ENCODE measurements at regions of chr5 and their contacts with region 1.

Region 1: GRCh38 chr5:67156976-67157583 is 39.5 kb downstream of the CD180 start:
- DNase-seq: peak; percentile 19
- ATAC-seq: peak; percentile 73
- H3K4me3 Mint-ChIP-seq: no peak overlapping the region
- H3K27ac Mint-ChIP-seq: no peak overlapping the region
- H3K4me1 Mint-ChIP-seq: peaks cover 11% of the 10 kb centered on the region
- H3K27me3 Mint-ChIP-seq: no peaks in the 10 kb centered on the region
- CTCF ChIP-seq: peak; percentile 80

Region 2: DNA sequence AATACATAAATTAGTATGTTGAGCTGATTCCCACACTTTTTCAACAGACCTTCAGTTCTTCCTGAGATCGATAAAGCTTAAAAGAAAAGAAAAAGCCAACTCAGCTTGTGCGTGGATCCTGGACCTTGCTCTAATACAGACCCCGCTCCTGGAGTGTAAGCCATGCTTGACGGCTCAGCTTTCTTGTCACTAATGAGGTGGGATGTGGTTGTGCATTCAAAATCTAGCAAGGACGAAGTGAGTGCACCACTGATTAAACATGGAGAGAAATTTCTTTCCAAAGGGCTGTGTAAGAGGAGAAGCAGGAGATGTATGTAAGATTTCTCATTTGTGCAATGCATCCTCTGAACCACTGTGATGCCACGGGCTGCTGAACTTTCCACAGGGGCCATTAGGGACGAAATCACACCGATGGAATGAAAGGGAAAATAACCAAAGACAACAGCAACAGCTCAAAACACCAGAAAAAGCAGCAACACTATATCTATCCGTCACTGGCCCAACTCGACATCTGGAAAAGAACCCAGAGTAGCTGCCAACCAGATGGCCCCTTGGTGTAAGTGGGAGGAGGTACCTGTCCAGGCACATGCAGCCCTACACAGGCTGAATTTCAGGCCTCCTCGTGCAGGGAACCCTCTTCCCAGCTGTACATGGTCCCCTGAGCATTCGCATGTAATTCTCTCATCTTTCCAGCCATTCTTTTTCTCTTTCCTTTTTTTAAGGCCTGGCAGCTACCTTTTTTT is 834.1 kb before region 1 on chr5:
- CTCF ChIA-PET with region 1: no interaction called
- POLR2A ChIA-PET with region 1: no interaction called
- intact Hi-C with region 1: no loop called
- DNase-seq: no peak
- ATAC-seq: no peak
- H3K4me3 Mint-ChIP-seq: no peak overlapping the region
- H3K27ac Mint-ChIP-seq: no peak overlapping the region
- H3K4me1 Mint-ChIP-seq: no peaks in the 10 kb centered on the region
- H3K27me3 Mint-ChIP-seq: peaks cover 17% of the 10 kb centered on the region
- CTCF ChIP-seq: no peak

Region 3: GRCh38 chr5:66987949-66988838 is 168.9 kb before region 1 on chr5:
- CTCF ChIA-PET with region 1: interaction called, 4 read pairs
- POLR2A ChIA-PET with region 1: no interaction called
- intact Hi-C with region 1: loop called (anchors 5 kb)
- DNase-seq: no peak
- ATAC-seq: peak; percentile 70
- H3K4me3 Mint-ChIP-seq: no peak overlapping the region
- H3K27ac Mint-ChIP-seq: no peak overlapping the region
- H3K4me1 Mint-ChIP-seq: peaks cover 6% of the 10 kb centered on the region
- H3K27me3 Mint-ChIP-seq: no peaks in the 10 kb centered on the region
- CTCF ChIP-seq: peak; percentile 57

Region 4: GRCh38 chr5:67003935-67004729 is 152.9 kb before region 1 on chr5:
- CTCF ChIA-PET with region 1: no interaction called
- POLR2A ChIA-PET with region 1: no interaction called
- intact Hi-C with region 1: loop called (anchors 5 kb)
- DNase-seq: peak; percentile 66
- ATAC-seq: peak; percentile 79
- H3K4me3 Mint-ChIP-seq: peak overlapping the region; percentile 87
- H3K27ac Mint-ChIP-seq: peak overlapping the region; percentile 72
- H3K4me1 Mint-ChIP-seq: peaks cover 30% of the 10 kb centered on the region
- H3K27me3 Mint-ChIP-seq: no peaks in the 10 kb centered on the region
- CTCF ChIP-seq: no peak

Region 5: GRCh38 chr5:67182301-67182790 is 25.3 kb after region 1 on chr5:
- CTCF ChIA-PET with region 1: interaction called, 10 read pairs
- POLR2A ChIA-PET with region 1: no interaction called
- intact Hi-C with region 1: no loop called
- DNase-seq: no peak
- ATAC-seq: no peak
- H3K4me3 Mint-ChIP-seq: no peak overlapping the region
- H3K27ac Mint-ChIP-seq: peak overlapping the region; percentile 86
- H3K4me1 Mint-ChIP-seq: peaks cover 84% of the 10 kb centered on the region
- H3K27me3 Mint-ChIP-seq: no peaks in the 10 kb centered on the region
- CTCF ChIP-seq: no peak

Region 6: GRCh38 chr5:67215583-67216471 is 58.7 kb after region 1 on chr5:
- CTCF ChIA-PET with region 1: interaction called, 100 read pairs
- POLR2A ChIA-PET with region 1: interaction called, 3 read pairs
- intact Hi-C with region 1: no loop called
- DNase-seq: peak; percentile 70
- ATAC-seq: peak; percentile 98
- H3K4me3 Mint-ChIP-seq: peak overlapping the region; percentile 76
- H3K27ac Mint-ChIP-seq: peak overlapping the region; percentile 98
- H3K4me1 Mint-ChIP-seq: peaks cover 58% of the 10 kb centered on the region
- H3K27me3 Mint-ChIP-seq: no peaks in the 10 kb centered on the region
- CTCF ChIP-seq: no peak

Region 7: GRCh38 chr5:68252673-68253623 is 1095.9 kb after region 1 on chr5:
- CTCF ChIA-PET with region 1: interaction called, 4 read pairs
- POLR2A ChIA-PET with region 1: no interaction called
- intact Hi-C with region 1: loop called (anchors 1 kb)
- DNase-seq: no peak
- ATAC-seq: peak; percentile 75
- H3K4me3 Mint-ChIP-seq: no peak overlapping the region
- H3K27ac Mint-ChIP-seq: no peak overlapping the region
- H3K4me1 Mint-ChIP-seq: peaks cover 83% of the 10 kb centered on the region
- H3K27me3 Mint-ChIP-seq: no peaks in the 10 kb centered on the region
- CTCF ChIP-seq: no peak

Measured in activated B cell treated with CpG ODN at 0.5 μM for 24 hours (primary cell).